ENCODE measurements at regions of chr17 and their contacts with region 1.

Region 1: GRCh38 chr17:72556944-72557826 is 436.4 kb downstream of the SOX9 start:
- DNase-seq: no peak
- H3K4me3 ChIP-seq: no peak overlapping the region
- H3K27ac ChIP-seq: no peak overlapping the region
- H3K27me3 ChIP-seq: no peaks in the 10 kb centered on the region
- CTCF ChIP-seq: peak; percentile 91

Region 2: GRCh38 chr17:72401883-72402726 is 155.1 kb before region 1 on chr17:
- CTCF ChIA-PET with region 1: no interaction called
- POLR2A ChIA-PET with region 1: no interaction called
- DNase-seq: no peak
- H3K4me3 ChIP-seq: no peak overlapping the region
- H3K27ac ChIP-seq: no peak overlapping the region
- H3K27me3 ChIP-seq: no peaks in the 10 kb centered on the region
- CTCF ChIP-seq: no peak

Region 3: DNA sequence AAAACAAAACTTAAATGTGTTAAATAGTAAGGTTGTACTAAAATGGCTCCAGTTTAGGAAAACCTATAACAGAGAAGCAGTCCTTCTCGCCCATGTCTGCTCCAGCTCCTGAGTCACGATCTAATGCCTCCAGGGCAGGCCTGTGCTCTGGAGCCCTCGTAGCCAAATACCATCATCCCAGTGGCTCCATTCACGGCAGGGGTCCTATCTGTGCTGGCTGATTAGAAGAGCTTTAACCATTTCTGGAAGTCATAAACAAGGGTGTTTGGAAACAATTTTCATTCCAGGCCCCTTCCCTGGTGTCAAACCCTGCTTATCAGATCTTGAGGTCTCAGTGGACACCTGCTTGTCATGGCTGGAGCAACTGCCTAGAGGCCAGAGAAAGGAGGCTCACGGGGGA is 99.5 kb before region 1 on chr17:
- CTCF ChIA-PET with region 1: no interaction called
- POLR2A ChIA-PET with region 1: no interaction called
- DNase-seq: no peak
- H3K4me3 ChIP-seq: no peak overlapping the region
- H3K27ac ChIP-seq: no peak overlapping the region
- H3K27me3 ChIP-seq: no peaks in the 10 kb centered on the region
- CTCF ChIP-seq: no peak

Region 4: DNA sequence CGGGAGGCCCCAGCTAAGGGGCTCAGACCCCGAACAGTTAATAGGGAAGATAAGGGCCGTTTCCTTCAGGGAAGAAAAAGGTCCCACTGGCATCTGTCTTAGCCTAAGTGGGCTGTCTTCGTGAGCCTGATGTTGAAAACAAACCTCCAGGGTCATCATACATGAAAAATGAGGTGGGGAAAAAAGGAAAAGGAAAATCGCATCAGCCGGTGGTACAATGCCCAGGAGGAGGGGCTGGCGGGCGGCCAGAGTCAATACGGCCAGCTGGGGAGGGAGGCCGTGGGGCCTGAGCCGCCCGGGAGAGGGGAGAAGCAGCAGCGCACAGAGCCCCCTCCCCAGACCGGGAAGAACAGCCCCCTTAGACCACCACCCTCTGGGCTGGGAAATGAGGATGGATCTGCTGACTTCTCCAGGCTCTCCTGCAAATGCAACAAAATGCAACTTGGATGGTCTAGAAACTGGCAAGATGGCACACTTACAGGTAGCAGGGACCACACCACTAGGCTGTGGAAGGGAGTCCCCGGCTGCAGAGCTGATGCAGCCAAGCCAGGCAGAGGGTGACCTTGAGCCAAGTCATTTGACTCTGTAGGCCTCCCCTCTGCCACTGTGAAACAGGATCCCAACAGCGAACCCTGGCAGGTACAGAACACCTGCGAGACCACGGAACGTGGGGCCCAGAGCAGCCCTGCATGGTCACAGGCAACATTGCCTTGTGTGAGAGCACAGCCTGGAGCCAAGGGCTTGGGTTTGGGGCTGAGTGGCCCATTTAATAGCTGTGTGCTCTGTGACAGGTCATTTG is 12.2 kb after region 1 on chr17:
- CTCF ChIA-PET with region 1: interaction called, 41 read pairs
- POLR2A ChIA-PET with region 1: no interaction called
- DNase-seq: no peak
- H3K4me3 ChIP-seq: no peak overlapping the region
- H3K27ac ChIP-seq: no peak overlapping the region
- H3K27me3 ChIP-seq: no peaks in the 10 kb centered on the region
- CTCF ChIP-seq: no peak

Region 5: GRCh38 chr17:72592242-72592966 is 35.2 kb after region 1 on chr17:
- CTCF ChIA-PET with region 1: interaction called, 20 read pairs
- POLR2A ChIA-PET with region 1: interaction called, 13 read pairs
- DNase-seq: peak; percentile 67
- H3K4me3 ChIP-seq: peak overlapping the region; percentile 96
- H3K27ac ChIP-seq: peak overlapping the region; percentile 21
- H3K27me3 ChIP-seq: no peaks in the 10 kb centered on the region
- CTCF ChIP-seq: no peak

Region 6: DNA sequence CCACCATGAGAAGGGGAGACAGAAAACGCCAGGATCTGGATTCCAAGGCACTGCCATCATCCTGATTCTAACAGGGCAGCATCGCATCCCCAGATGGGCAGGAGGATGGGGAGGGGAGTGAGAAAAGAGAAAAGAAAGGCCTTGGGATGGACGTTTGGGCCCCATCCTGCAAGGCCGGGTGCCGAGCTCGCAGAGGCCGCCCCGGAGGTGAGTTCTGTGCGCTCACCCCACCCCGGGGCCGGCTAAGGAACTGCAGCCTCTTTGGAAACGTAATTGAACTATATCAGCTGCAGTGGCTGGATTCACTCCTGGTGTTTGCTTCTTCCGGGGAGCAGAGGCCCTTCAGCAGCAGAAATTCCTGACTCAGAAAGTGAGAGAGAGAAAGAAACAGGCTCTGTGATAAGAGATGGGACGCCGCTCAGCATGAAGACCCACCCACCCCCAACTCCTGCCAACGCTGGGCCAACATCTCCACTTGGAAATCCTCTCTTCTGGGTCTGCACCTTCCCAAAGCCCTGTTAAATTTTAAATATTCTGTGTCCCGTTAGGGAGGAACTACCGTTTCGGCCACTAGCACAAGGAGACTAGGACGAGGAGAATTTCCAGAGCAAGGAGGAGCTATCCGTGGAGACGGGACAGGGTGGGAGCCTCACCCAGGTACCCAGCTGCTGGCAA is 599.1 kb after region 1 on chr17:
- CTCF ChIA-PET with region 1: interaction called, 21 read pairs
- POLR2A ChIA-PET with region 1: no interaction called
- DNase-seq: peak; percentile 27
- H3K4me3 ChIP-seq: no peak overlapping the region
- H3K27ac ChIP-seq: no peak overlapping the region
- H3K27me3 ChIP-seq: peaks cover 15% of the 10 kb centered on the region
- CTCF ChIP-seq: peak; percentile 85

Region 7: DNA sequence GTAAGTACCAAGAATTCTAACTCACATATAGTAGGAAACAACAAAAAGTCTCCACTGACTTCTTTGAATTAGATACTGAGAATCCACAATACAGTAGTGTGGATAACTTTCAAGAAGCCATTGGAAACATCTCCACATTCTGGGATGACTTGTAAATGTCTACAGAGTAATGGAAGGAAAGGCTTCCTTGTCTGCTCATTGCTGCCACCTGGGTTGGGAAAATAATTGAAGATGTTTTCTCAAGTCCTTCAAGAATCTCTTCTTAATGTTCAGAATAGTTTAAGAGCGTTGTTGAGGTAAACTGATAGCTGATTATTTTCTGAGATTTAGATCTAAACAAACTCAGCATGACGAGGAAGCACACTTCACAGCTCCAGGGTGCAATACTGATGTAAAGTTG is 690.5 kb after region 1 on chr17:
- CTCF ChIA-PET with region 1: interaction called, 15 read pairs
- POLR2A ChIA-PET with region 1: no interaction called
- DNase-seq: no peak
- H3K4me3 ChIP-seq: no peak overlapping the region
- H3K27ac ChIP-seq: no peak overlapping the region
- H3K27me3 ChIP-seq: no peaks in the 10 kb centered on the region
- CTCF ChIP-seq: no peak; the same call in 1 of the 2 replicates

Measured in AG04450 (cell line).